Ovary (tissue), 10 donors: ENCODE measurements at regions of chr17 and their contacts with region 1.

Region 1: GRCh38 chr17:49567871-49568694 is 7.6 kb upstream of the NXPH3 start:
- DNase-seq: peak; percentile 86 to 93 (median 92)
- H3K4me3 ChIP-seq: peak overlapping the region; percentile 29
- H3K27ac ChIP-seq: peak overlapping the region in 1 of 2 donors; percentile 59
- H3K4me1 ChIP-seq: peaks cover 2% of the 10 kb centered on the region
- H3K27me3 ChIP-seq: no peaks in the 10 kb centered on the region
- CTCF ChIP-seq: peak; percentile 80 to 100 (median 98)
- EP300 ChIP-seq: no peak
- POLR2A ChIP-seq: no peak

Region 2: DNA sequence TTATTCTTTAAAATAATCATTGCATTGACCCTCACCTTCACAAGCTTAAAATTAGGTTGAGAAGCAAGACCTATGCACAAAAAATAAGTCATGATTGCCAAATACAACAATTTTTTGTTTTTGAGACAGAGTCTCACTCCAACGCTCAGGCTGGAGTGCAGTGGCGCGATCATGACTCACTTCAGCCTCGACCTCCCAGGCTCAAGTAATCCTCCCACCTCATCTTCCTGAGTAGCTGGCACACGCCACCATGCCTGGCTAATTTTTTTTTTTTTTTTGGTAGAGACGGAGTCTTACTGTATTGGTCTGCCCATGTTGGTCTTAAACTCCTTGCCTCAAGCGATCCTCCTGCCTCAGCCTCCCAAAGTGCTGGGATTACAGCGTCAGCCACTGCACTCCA is 230.2 kb before region 1 on chr17:
- intact Hi-C with region 1: loop called in 1 of 4 experiments (anchors 10 kb)
- DNase-seq: peak; percentile 24 to 57 (median 46)
- H3K4me3 ChIP-seq: no peak overlapping the region
- H3K27ac ChIP-seq: no peak overlapping the region
- H3K4me1 ChIP-seq: peaks cover 18% of the 10 kb centered on the region
- H3K27me3 ChIP-seq: no peaks in the 10 kb centered on the region
- CTCF ChIP-seq: no peak
- EP300 ChIP-seq: no peak
- POLR2A ChIP-seq: no peak

Region 3: GRCh38 chr17:49439673-49440571 is 128.2 kb before region 1 on chr17:
- intact Hi-C with region 1: no loop called
- DNase-seq: no peak
- H3K4me3 ChIP-seq: no peak overlapping the region
- H3K27ac ChIP-seq: no peak overlapping the region
- H3K4me1 ChIP-seq: no peaks in the 10 kb centered on the region
- H3K27me3 ChIP-seq: no peaks in the 10 kb centered on the region
- CTCF ChIP-seq: no peak
- EP300 ChIP-seq: no peak
- POLR2A ChIP-seq: no peak

Region 4: DNA sequence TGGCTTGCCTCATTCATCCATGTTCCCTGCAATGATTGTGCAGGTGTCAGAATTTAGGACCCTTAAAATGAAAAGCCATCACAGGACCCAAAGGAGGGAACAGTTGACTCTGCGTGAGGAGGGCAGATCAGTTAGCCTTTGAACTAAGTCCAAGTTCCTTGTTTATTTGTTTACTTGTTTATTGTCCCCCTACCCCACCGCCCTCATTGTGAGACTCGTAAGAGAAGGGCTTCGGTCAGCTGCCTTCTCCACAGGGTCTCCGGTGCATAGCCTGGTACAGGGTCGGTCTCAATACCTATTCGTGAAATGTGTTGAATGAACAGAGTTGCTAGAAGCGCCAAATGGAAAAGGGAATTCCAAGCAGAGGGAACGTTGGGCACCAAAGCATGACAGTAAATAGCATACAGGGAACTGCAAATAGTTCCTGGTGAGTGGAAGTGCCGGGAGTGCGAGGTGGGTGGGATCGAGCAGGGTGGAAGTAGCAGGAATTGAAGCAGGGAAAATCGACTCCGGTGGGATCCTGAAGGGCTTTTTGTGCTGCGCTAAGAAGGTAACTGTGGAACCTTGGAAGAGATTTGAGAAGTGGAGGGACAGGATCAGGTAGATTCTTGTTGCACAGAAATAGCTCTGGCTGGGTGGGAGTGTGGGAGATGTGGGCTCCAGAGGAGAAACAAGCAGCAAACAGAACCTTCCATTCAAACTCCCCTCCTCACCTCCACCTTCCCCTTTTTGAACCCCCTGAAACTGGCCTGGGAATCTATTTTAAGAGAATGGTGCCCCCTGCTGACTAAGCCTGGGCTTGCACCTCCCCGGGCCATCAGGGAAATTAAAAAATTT is 127.0 kb after region 1 on chr17:
- intact Hi-C with region 1: loop called (anchors 1 to 2 kb)
- DNase-seq: peak; percentile 41 to 75 (median 70)
- H3K4me3 ChIP-seq: no peak overlapping the region
- H3K27ac ChIP-seq: no peak overlapping the region
- H3K4me1 ChIP-seq: peaks cover 3% of the 10 kb centered on the region
- H3K27me3 ChIP-seq: no peaks in the 10 kb centered on the region
- CTCF ChIP-seq: peak; percentile 86 to 93 (median 90)
- EP300 ChIP-seq: no peak
- POLR2A ChIP-seq: peak; percentile 33

Region 5: DNA sequence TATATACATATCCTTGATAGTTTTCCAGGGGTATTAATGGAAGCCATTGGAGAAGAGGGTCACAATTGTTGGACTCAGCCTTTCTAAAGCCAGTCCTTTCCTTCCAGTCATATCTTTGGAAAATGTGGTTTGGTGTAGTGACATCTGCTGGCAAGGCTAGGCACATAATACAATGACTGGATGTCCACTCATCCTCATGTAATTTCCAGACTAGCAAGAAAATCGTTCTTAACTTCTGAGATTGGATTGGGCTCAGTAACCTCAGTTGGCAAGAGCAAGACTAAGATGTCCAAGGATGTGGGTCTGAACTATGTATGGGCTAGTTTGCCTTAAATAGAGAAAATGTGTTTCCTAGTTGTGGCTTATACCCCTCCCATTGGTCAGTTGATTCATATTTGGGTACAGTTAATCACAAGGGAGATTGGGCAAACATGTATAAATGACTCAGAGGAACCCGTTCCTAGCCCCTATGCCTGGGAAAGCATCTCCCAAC is 211.7 kb after region 1 on chr17:
- intact Hi-C with region 1: loop called (anchors 2 to 5 kb)
- DNase-seq: peak in 2 of 5 donors; percentile 20 to 52
- H3K4me3 ChIP-seq: no peak overlapping the region
- H3K27ac ChIP-seq: no peak overlapping the region
- H3K4me1 ChIP-seq: peaks cover 4% of the 10 kb centered on the region
- H3K27me3 ChIP-seq: no peaks in the 10 kb centered on the region
- CTCF ChIP-seq: peak in 2 of 3 donors; percentile 59 to 66
- EP300 ChIP-seq: no peak
- POLR2A ChIP-seq: no peak

Region 6: GRCh38 chr17:49851387-49852291 is 283.6 kb after region 1 on chr17:
- intact Hi-C with region 1: loop called in 2 of 4 experiments (anchors 10 kb)
- DNase-seq: peak; percentile 46 to 80 (median 77)
- H3K4me3 ChIP-seq: peak overlapping the region; percentile 31
- H3K27ac ChIP-seq: no peak overlapping the region
- H3K4me1 ChIP-seq: peaks cover 1% of the 10 kb centered on the region
- H3K27me3 ChIP-seq: no peaks in the 10 kb centered on the region
- CTCF ChIP-seq: peak; percentile 29 to 46 (median 31)
- EP300 ChIP-seq: no peak
- POLR2A ChIP-seq: no peak